WTC11 (cell line): ENCODE measurements at regions of chr1 and their contacts with region 1.

Region 1: DNA sequence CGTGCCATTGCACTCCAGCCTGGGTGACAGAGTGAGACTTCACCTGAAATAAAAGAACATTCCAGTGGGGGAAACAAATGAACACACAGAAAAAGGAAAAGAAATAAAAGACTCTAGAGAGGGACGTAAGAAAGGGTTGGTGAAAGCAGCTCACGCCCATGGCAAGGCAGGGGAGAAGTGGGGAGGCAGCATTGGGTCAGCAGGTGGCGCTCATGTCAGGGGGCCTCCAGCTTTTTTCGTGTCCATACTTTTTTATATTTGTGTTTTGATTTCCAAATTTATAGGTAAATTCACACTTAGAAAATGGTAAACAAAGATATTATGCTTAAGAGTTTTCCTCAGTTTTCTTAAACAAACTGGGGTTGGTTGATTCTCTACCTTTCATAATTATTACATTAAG is 45.5 kb downstream of the VPS13D start:
- DNase-seq: peak; percentile 60
- ATAC-seq: peak; percentile 74
- H3K4me3 Mint-ChIP-seq: no peak overlapping the region
- H3K27ac Mint-ChIP-seq: no peak overlapping the region
- H3K4me1 Mint-ChIP-seq: peaks cover 6% of the 10 kb centered on the region
- H3K27me3 Mint-ChIP-seq: no peaks in the 10 kb centered on the region
- CTCF ChIP-seq: peak; percentile 57

Region 2: GRCh38 chr1:11784993-11785769 is 490.2 kb before region 1 on chr1:
- CTCF ChIA-PET with region 1: no interaction called
- POLR2A ChIA-PET with region 1: no interaction called
- DNase-seq: peak; percentile 92
- ATAC-seq: peak; percentile 88
- H3K4me3 Mint-ChIP-seq: peak overlapping the region; percentile 30; the same call in 1 of the 2 replicates
- H3K27ac Mint-ChIP-seq: peak overlapping the region; percentile 70; the same call in 1 of the 2 replicates
- H3K4me1 Mint-ChIP-seq: peaks cover 32% of the 10 kb centered on the region
- H3K27me3 Mint-ChIP-seq: no peaks in the 10 kb centered on the region
- CTCF ChIP-seq: peak; percentile 88

Region 3: DNA sequence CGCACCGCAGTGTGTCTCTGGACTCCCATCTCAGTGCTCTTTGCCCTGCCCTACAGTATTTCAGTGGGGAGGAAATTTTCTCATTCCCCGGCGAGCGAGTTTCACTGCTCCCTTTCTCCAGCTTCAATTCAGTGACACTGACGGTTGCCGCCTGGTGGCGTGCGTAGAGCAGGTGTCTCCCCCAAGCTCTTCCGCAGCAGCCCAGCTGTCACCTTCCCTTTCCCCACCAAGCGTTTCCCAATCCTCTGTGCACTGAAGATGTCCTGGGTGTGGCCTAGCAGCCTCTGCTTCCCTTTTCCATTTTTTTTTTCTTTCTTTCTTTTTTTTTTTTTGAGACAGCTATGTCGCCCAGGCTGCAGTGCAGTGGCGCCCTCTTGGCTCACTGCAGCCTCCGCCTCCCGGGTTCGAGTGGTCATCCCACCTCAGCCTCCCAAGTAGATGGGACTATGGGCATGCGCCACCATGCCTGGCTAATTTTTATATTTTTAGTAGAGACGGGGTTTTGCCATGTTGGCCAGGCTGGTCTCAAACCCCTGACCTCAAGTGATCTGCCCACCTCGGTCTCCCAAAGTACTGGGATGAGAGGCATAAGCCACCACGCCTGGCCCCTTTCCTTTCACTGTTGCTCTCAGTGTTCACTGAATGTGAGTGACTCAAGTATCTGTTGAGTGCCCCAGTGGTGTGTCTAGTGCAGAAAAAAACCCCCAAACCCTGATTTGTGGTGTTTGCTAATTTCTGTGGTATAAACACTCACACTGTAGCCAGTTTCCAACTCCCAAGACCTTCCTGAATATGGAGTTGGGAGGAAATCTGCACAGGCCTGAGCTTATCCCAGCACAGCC is 78.5 kb before region 1 on chr1:
- CTCF ChIA-PET with region 1: interaction called, 19 read pairs
- POLR2A ChIA-PET with region 1: no interaction called
- DNase-seq: peak; percentile 64
- ATAC-seq: peak; percentile 74
- H3K4me3 Mint-ChIP-seq: no peak overlapping the region
- H3K27ac Mint-ChIP-seq: no peak overlapping the region
- H3K4me1 Mint-ChIP-seq: peaks cover 13% of the 10 kb centered on the region
- H3K27me3 Mint-ChIP-seq: no peaks in the 10 kb centered on the region
- CTCF ChIP-seq: no peak

Region 4: GRCh38 chr1:12229835-12230548 is 45.4 kb before region 1 on chr1 and contains the start of gene VPS13D:
- CTCF ChIA-PET with region 1: interaction called, 10 read pairs
- POLR2A ChIA-PET with region 1: no interaction called
- DNase-seq: peak; percentile 86
- ATAC-seq: peak; percentile 92
- H3K4me3 Mint-ChIP-seq: peak within 1 kb of the TSS; percentile 82
- H3K27ac Mint-ChIP-seq: no peak within 1 kb of the TSS
- H3K4me1 Mint-ChIP-seq: peaks cover 17% of the 10 kb centered on the region
- H3K27me3 Mint-ChIP-seq: no peaks in the 10 kb centered on the region
- CTCF ChIP-seq: peak; percentile 88
- total RNA-seq, gene VPS13D: 22.1 to 29.0 TPM (median 27.5 TPM) in 3 replicates

Region 5: DNA sequence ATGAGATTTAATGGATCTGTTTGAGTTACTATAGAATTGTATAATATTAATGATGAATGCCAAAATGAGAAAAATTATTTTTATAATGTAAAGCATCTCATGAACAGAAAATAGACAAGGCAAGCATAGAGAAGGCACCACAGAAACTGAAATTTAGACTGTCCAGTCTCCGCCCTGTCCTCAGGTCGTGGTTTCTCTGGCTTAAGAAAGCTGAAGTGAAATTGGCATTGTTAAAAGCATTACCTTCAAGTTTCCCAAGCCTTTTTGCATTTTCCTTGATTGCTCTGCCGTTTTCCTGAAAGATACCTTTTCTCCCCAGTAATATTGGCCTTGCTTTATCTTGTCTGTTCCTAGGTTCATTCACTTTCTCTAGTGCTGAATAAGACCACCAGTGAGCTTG is 12.5 kb after region 1 on chr1:
- CTCF ChIA-PET with region 1: interaction called, 24 read pairs
- POLR2A ChIA-PET with region 1: no interaction called
- DNase-seq: no peak
- ATAC-seq: no peak
- H3K4me3 Mint-ChIP-seq: no peak overlapping the region
- H3K27ac Mint-ChIP-seq: no peak overlapping the region
- H3K4me1 Mint-ChIP-seq: no peaks in the 10 kb centered on the region
- H3K27me3 Mint-ChIP-seq: no peaks in the 10 kb centered on the region
- CTCF ChIP-seq: no peak

Region 6: DNA sequence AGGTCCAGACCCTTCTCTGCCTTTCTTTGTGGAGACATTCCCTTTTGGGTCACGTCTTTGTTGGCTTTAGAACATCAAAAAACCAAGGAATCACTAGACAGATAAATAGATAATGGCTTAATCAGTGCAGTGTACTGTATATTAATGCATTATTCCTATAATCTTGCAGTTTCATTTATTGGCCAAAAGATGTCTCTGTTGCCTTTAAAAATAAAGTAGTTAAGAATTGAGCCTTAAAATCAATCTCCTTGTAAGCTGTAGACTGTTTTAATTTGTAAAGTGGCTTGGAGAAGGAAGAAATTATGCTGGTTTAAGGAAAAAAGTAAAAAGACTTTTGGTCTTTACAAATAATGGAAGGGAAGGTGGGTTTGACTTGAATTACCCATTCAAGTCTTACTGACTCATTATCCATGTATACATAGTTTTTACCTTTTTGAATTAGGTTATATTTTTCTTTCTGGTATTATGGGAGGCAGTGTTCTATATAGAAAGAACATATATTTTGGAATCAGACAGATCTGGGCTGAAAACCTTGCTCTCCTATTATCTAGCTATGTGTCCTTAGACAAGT is 39.0 kb after region 1 on chr1:
- CTCF ChIA-PET with region 1: interaction called, 11 read pairs
- POLR2A ChIA-PET with region 1: no interaction called
- DNase-seq: no peak
- ATAC-seq: no peak
- H3K4me3 Mint-ChIP-seq: no peak overlapping the region
- H3K27ac Mint-ChIP-seq: no peak overlapping the region
- H3K4me1 Mint-ChIP-seq: peaks cover 7% of the 10 kb centered on the region
- H3K27me3 Mint-ChIP-seq: no peaks in the 10 kb centered on the region
- CTCF ChIP-seq: no peak

Region 7: GRCh38 chr1:12541274-12542142 is 266.1 kb after region 1 on chr1:
- CTCF ChIA-PET with region 1: interaction called, 12 read pairs
- POLR2A ChIA-PET with region 1: no interaction called
- DNase-seq: no peak
- ATAC-seq: no peak
- H3K4me3 Mint-ChIP-seq: no peak overlapping the region
- H3K27ac Mint-ChIP-seq: no peak overlapping the region
- H3K4me1 Mint-ChIP-seq: peaks cover 26% of the 10 kb centered on the region
- H3K27me3 Mint-ChIP-seq: peaks cover 3% of the 10 kb centered on the region; the same call in 1 of the 2 replicates
- CTCF ChIP-seq: no peak

Region 8: DNA sequence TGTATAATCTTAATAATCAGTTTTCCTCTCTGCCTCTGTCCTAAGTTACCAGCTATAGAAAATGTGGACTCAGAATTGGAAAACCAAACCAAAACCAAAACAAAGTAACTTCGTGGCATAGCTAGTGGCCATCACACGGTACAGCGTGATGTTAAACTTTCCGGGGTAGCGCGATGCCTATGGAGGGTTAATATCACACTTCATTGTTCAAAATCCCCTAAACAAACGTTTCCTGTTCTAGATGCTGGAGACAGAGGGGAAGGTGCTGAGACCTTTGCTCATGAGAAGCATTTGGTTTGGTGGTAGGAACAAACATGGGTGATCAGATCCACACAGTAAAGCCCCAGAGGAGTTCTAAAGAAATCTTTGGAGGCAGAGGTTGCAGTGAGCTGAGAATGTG is 373.4 kb after region 1 on chr1:
- CTCF ChIA-PET with region 1: no interaction called
- POLR2A ChIA-PET with region 1: no interaction called
- DNase-seq: no peak
- ATAC-seq: no peak
- H3K4me3 Mint-ChIP-seq: no peak overlapping the region
- H3K27ac Mint-ChIP-seq: no peak overlapping the region
- H3K4me1 Mint-ChIP-seq: peaks cover 7% of the 10 kb centered on the region; the same call in 1 of the 2 replicates
- H3K27me3 Mint-ChIP-seq: peaks cover 5% of the 10 kb centered on the region
- CTCF ChIP-seq: no peak

Region 9: GRCh38 chr1:12658531-12659453 is 383.4 kb after region 1 on chr1:
- CTCF ChIA-PET with region 1: interaction called, 22 read pairs
- POLR2A ChIA-PET with region 1: no interaction called
- DNase-seq: peak; percentile 85
- ATAC-seq: peak; percentile 92
- H3K4me3 Mint-ChIP-seq: no peak overlapping the region
- H3K27ac Mint-ChIP-seq: no peak overlapping the region
- H3K4me1 Mint-ChIP-seq: peaks cover 15% of the 10 kb centered on the region
- H3K27me3 Mint-ChIP-seq: peaks cover 16% of the 10 kb centered on the region
- CTCF ChIP-seq: peak; percentile 86